Naive thymus-derived CD4-positive, alpha-beta T cell (primary cell): ENCODE measurements at regions of chr9 and their contacts with region 1.

Region 1: GRCh38 chr9:127734747-127735529 is at the start of gene TOR2A:
- DNase-seq: peak; percentile 97 to 99 (median 98)
- ATAC-seq: peak; percentile 97
- H3K4me3 ChIP-seq: peak within 1 kb of the TSS; percentile 73
- H3K4me3 Mint-ChIP-seq: peak within 1 kb of the TSS; percentile 82 to 97 (median 88)
- H3K27ac ChIP-seq: peak within 1 kb of the TSS; percentile 88
- H3K27ac Mint-ChIP-seq: peak within 1 kb of the TSS; percentile 89 to 98 (median 93)
- H3K4me1 ChIP-seq: peaks cover 14 to 15% of the 10 kb centered on the region in 2 donors
- H3K4me1 Mint-ChIP-seq: peaks cover 0 to 21% (median 18%) of the 10 kb centered on the region in 7 donors
- H3K27me3 ChIP-seq: no peaks in the 10 kb centered on the region
- H3K27me3 Mint-ChIP-seq: no peaks in the 10 kb centered on the region
- total RNA-seq, gene TOR2A: 9.5 to 22.3 (median 10.8) TPM

Region 2: GRCh38 chr9:127423934-127424675 is 310.8 kb before region 1 on chr9 and contains the start of gene ZNF79:
- CTCF ChIA-PET with region 1: no interaction called
- POLR2A ChIA-PET with region 1: no interaction called
- intact Hi-C with region 1: loop called in 1 of 2 experiments (anchors 1 kb)
- DNase-seq: peak; percentile 80 to 96 (median 84)
- ATAC-seq: peak; percentile 94
- H3K4me3 ChIP-seq: peak within 1 kb of the TSS; percentile 96
- H3K4me3 Mint-ChIP-seq: peak within 1 kb of the TSS; percentile 93 to 99 (median 98)
- H3K27ac ChIP-seq: peak within 1 kb of the TSS; percentile 83
- H3K27ac Mint-ChIP-seq: peak within 1 kb of the TSS; percentile 91 to 96 (median 94)
- H3K4me1 ChIP-seq: peaks cover 12 to 27% of the 10 kb centered on the region in 2 donors
- H3K4me1 Mint-ChIP-seq: peaks cover 39 to 54% (median 50%) of the 10 kb centered on the region in 7 donors
- H3K27me3 ChIP-seq: no peaks in the 10 kb centered on the region
- H3K27me3 Mint-ChIP-seq: no peaks in the 10 kb centered on the region
- total RNA-seq, gene ZNF79: 4.8 to 17.8 (median 13.6) TPM

Region 3: DNA sequence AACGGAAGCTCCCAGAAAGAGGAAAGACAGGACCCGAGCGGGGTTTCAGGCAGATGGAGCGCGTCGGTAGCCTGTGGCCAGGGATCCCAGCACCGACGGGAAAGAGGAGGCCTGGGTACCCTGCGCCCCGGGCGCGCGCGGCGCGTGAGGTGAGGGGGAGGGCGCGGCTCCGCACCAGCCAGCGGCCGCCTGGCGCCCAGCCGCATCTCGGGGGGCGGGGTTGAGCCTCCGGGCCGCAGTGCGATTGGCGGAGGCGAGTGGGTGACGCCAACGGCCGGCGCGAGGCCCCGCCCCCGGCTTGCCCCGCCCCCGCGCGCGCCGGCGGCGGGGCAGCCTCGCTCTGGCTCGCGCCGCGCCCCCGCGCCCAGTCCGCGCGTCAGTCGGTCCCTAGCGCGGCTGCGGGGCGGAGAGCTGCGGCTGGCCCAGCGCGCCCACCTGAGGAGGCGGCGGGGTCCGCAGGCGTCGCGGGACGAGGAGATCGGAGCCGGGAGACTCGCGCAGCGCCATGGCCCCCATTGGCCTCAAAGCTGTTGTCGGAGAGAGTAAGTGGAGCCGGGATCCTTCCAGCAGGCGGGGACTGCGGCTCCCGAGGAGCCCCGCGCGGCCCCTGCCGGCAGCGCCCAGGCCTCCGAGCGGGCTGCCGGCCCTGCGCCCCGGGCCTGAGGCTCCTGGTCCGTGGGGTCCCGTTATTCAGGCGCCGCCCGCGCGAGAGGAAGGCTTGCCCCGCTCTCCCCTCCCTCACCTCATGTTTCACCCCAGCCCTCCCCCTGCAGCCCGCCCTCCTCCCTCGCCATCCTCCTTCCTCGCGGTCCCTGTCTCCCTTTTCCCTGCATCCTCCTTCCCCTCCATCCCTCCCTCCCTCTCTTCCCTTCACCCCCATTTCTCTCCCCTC is 122.8 kb before region 1 on chr9 and contains the start of gene STXBP1:
- CTCF ChIA-PET with region 1: interaction called, 6 read pairs
- POLR2A ChIA-PET with region 1: interaction called, 3 read pairs
- intact Hi-C with region 1: loop called in 1 of 2 experiments (anchors 1 kb)
- DNase-seq: peak; percentile 68 to 96 (median 79)
- ATAC-seq: peak; percentile 93
- H3K4me3 ChIP-seq: peak within 1 kb of the TSS; percentile 89
- H3K4me3 Mint-ChIP-seq: peak within 1 kb of the TSS; percentile 90 to 99 (median 96)
- H3K27ac ChIP-seq: peak within 1 kb of the TSS; percentile 51
- H3K27ac Mint-ChIP-seq: peak within 1 kb of the TSS; percentile 66 to 93 (median 86)
- H3K4me1 ChIP-seq: peaks cover 11 to 16% of the 10 kb centered on the region in 2 donors
- H3K4me1 Mint-ChIP-seq: peaks cover 32 to 42% (median 37%) of the 10 kb centered on the region in 7 donors
- H3K27me3 ChIP-seq: no peaks in the 10 kb centered on the region
- H3K27me3 Mint-ChIP-seq: peaks cover 0 to 40% (median 17%) of the 10 kb centered on the region in 5 donors
- total RNA-seq, gene STXBP1: 6.7 to 17.8 (median 14.1) TPM

Region 4: GRCh38 chr9:127785023-127785932 is 50.3 kb after region 1 on chr9:
- CTCF ChIA-PET with region 1: interaction called, 16 read pairs
- POLR2A ChIA-PET with region 1: interaction called, 23 read pairs
- intact Hi-C with region 1: loop called (anchors 1 kb)
- DNase-seq: peak; percentile 82 to 93 (median 90)
- ATAC-seq: peak; percentile 65
- H3K4me3 ChIP-seq: peak overlapping the region; percentile 53
- H3K4me3 Mint-ChIP-seq: peak overlapping the region; percentile 82 to 95 (median 92)
- H3K27ac ChIP-seq: peak overlapping the region; percentile 90
- H3K27ac Mint-ChIP-seq: peak overlapping the region; percentile 91 to 98 (median 96)
- H3K4me1 ChIP-seq: peaks cover 56 to 59% of the 10 kb centered on the region in 2 donors
- H3K4me1 Mint-ChIP-seq: peaks cover 34 to 75% (median 61%) of the 10 kb centered on the region in 7 donors
- H3K27me3 ChIP-seq: no peaks in the 10 kb centered on the region
- H3K27me3 Mint-ChIP-seq: no peaks in the 10 kb centered on the region

Region 5: DNA sequence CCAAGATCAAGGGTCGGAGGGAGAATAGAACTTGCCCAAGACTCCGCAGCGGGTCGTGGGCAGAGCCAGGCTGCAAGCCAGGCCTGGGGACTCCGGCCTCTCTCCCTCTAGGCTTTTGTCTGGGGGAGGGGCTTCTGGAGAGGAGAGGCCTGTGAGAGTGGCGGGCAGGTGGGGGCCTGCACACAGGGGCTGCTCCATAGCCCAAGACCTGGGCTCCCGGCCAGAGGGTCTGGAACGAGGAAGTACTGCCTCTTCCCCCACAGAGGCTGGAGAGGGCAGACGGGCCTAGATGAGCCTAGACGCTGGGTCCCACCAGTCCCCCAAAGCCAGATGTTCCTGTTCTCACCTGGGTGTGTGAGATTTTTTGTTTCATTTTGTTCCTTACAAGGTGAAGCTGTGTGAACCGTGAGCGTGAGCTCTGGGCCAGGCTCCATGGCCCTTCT is 169.6 kb after region 1 on chr9:
- CTCF ChIA-PET with region 1: interaction called, 10 read pairs
- POLR2A ChIA-PET with region 1: no interaction called
- intact Hi-C with region 1: loop called in 1 of 2 experiments (anchors 1 kb)
- DNase-seq: peak in 1 of 9 donors; percentile 29
- ATAC-seq: peak; percentile 2
- H3K4me3 ChIP-seq: peak overlapping the region; percentile 72
- H3K4me3 Mint-ChIP-seq: peak overlapping the region; percentile 86 to 98 (median 94)
- H3K27ac ChIP-seq: peak overlapping the region; percentile 95
- H3K27ac Mint-ChIP-seq: peak overlapping the region; percentile 96 to 100 (median 99)
- H3K4me1 ChIP-seq: peaks cover 35 to 49% of the 10 kb centered on the region in 2 donors
- H3K4me1 Mint-ChIP-seq: peaks cover 38 to 68% (median 52%) of the 10 kb centered on the region in 7 donors
- H3K27me3 ChIP-seq: no peaks in the 10 kb centered on the region
- H3K27me3 Mint-ChIP-seq: no peaks in the 10 kb centered on the region

Region 6: DNA sequence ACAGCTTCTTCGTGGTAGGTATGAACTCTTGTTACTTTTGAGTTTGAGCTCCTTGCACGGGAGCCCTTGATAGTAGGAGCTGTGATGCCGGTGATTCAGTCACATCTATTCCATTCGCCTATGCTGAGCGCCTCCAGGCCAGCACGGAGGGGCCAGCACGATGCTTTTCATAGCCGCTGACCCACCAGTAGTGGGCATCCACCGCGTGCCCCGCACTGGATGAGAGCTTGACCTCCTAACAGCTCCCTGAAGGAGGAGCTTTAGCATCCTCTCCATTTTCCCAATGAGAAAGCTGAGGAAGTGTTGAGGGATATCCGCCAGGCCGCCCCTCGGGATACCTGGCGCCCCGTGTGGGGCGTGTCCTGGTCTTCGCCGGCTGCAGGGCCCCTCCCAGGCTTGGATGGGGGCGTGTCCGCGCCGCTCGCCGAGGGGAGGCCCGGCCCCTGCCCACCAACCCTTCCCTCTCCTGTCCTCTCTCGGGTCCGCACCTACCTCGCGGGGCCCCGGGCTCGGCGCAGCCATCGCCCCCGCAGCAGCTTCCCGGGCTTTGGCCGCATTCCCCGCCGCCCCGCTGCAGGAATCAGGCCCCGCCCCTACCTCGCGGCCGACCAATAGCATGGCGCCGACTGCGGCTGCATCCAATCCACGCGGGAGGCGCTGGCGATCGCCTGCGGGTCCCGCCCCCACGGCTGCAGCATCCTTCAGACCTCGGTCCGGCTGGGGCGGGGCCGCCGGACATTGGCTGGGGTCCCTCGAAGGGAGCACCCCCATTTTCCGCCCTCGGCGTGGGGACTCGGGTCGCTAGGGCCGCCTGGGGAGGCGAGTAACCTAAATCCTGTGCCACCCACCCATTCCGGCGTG is 195.5 kb after region 1 on chr9 and contains the start of gene PIP5KL1:
- CTCF ChIA-PET with region 1: no interaction called
- POLR2A ChIA-PET with region 1: no interaction called
- intact Hi-C with region 1: no loop called
- DNase-seq: peak; percentile 48 to 86 (median 70)
- ATAC-seq: peak; percentile 82
- H3K4me3 ChIP-seq: peak within 1 kb of the TSS; percentile 70
- H3K4me3 Mint-ChIP-seq: peak within 1 kb of the TSS; percentile 66 to 85 (median 78)
- H3K27ac ChIP-seq: peak within 1 kb of the TSS; percentile 6
- H3K27ac Mint-ChIP-seq: peak within 1 kb of the TSS; percentile 51 to 93 (median 76)
- H3K4me1 ChIP-seq: peaks cover 21 to 30% of the 10 kb centered on the region in 2 donors
- H3K4me1 Mint-ChIP-seq: peaks cover 17 to 48% (median 43%) of the 10 kb centered on the region in 7 donors
- H3K27me3 ChIP-seq: no peaks in the 10 kb centered on the region
- H3K27me3 Mint-ChIP-seq: peaks cover 0 to 23% (median 0%) of the 10 kb centered on the region in 5 donors
- total RNA-seq, gene PIP5KL1: 1.4 to 2.9 (median 2.1) TPM

Region 7: DNA sequence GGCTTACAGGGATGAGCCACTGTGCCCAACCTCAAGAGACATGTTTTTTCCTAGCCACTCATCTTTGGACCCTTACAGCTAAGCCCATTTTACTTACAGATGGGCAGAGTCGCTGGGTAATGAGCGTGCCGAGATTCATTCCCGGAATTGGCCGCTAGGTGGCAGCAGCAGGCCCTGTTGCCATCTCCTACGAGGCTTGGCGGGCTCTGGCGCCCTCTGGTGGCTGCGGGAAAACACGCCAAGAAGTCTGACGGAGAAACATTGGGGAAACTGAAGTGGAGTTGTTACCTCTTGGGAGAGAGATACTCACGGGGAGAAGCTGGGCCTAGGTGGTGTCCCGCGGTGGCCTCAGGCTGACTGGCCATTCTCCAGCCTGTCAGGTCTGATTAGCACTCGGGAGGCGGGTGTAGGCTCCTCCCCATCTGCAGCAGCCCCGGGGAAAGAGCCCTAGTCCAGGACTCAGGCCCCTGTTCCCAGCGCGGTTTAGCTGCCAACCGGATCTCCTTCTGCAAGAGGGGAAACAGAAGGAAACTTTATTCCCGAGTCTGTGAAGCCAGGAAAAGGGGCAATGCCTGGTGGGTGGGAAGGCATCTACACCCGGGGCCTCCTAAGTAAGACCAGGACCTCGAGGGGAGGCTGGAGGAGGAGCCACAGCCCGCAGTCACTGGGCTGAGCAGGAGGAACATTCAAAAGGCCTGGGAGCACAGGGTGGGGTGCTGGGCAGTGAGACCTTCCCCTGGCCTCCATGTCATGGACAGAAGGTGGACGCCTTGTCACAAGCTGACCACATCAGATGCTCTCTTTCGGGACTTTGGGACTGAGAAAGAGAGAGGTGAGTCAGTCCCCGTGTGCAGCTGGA is 382.9 kb after region 1 on chr9:
- CTCF ChIA-PET with region 1: interaction called, 3 read pairs
- POLR2A ChIA-PET with region 1: no interaction called
- intact Hi-C with region 1: loop called in 1 of 2 experiments (anchors 1 kb)
- DNase-seq: peak; percentile 82 to 99 (median 92)
- ATAC-seq: peak; percentile 97
- H3K4me3 ChIP-seq: no peak overlapping the region
- H3K4me3 Mint-ChIP-seq: peak overlapping the region in 4 of 10 donors; percentile 3 to 59 (median 36)
- H3K27ac ChIP-seq: no peak overlapping the region
- H3K27ac Mint-ChIP-seq: peak overlapping the region in 8 of 9 donors; percentile 11 to 88 (median 60)
- H3K4me1 ChIP-seq: peaks cover 0 to 7% of the 10 kb centered on the region in 2 donors
- H3K4me1 Mint-ChIP-seq: peaks cover 6 to 13% (median 7%) of the 10 kb centered on the region in 7 donors
- H3K27me3 ChIP-seq: no peaks in the 10 kb centered on the region
- H3K27me3 Mint-ChIP-seq: no peaks in the 10 kb centered on the region